GM13976 (cell line): ENCODE measurements at regions of chr9 and their contacts with region 1.

Region 1: DNA sequence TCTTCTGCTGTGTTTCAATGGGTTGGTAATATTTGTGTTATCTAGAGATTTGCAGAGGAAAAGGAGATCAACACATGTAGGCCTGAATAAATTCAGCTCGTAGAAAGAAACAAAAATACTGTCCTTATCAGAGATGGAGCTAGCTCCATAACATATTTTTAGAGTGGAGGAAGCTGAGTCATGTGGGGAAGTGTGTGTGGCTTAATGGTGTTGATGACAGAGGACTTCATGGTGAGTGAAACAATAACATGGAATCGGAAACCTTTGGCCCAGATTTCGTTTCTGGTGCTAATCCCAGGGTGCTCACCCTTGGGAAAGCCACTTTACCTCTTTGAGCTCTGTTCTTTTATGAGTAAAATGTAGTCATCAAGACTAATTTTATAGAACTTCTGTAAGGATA is 825.0 kb downstream of the TLR4 start:
- DNase-seq: no peak
- CTCF ChIP-seq: no peak

Region 2: DNA sequence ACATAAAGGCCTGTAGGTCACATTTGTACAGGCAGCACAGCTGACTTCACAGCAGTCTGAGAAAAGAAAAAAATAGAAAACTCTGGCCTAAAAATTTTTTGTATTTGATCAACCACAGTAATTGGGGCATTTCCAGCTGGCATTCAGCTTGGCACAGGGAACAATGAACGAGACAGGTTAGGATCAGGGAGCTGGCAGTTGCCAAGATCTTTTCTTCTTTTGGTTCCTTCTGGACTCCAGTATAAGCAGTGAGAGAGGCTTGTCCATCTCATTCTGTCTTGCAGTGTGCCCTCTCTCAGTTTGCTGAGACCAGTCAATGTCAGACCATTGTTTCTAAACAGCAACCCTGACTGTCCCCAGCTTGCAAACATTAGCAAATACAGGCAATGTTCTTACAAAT is 223.9 kb before region 1 on chr9:
- in situ Hi-C with region 1: no loop called
- DNase-seq: no peak
- CTCF ChIP-seq: no peak

Region 3: GRCh38 chr9:118364266-118365106 is 164.7 kb before region 1 on chr9:
- in situ Hi-C with region 1: no loop called
- DNase-seq: no peak
- CTCF ChIP-seq: no peak

Region 4: GRCh38 chr9:118595719-118596305 is 66.6 kb after region 1 on chr9:
- in situ Hi-C with region 1: loop called (anchors 10 kb)
- DNase-seq: no peak
- CTCF ChIP-seq: no peak

Region 5: GRCh38 chr9:119289740-119290433 is 760.7 kb after region 1 on chr9:
- in situ Hi-C with region 1: loop called (anchors 25 kb)
- DNase-seq: peak; percentile 55
- CTCF ChIP-seq: peak; percentile 55